Naive thymus-derived CD4-positive, alpha-beta T cell (primary cell): ENCODE measurements at regions of chr6 and their contacts with region 1.

Region 1: DNA sequence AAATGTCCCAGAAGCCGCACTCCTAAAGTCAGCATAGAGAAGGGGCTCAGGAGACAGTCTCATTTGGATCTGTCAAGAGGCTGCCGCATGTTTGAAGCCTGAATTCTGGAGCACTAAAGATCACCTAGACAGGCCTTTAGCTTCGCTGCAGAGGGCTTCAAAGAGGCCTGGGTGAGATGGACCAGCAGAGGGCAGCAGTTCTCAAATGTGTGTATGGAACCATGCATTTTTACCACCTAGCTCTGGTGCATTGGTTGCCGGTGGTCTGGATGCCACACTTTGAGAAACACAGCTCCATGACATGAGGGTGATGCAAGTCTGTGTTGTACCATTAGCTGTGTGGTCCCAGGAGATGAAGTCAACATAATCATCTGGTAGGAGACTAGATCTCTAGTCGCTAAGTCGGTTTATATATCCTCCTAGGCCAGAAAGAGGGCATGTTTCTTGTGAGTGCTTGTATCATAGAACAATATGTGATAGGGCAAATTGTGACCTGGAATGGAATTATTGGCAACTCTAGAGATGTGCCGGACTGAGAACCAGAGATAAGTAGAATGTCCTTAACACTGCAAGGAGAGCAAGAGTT is 64.8 kb downstream of the KIAA0319 start:
- DNase-seq: peak; percentile 44 to 73 (median 65)
- ATAC-seq: peak; percentile 92
- H3K4me3 ChIP-seq: no peak overlapping the region
- H3K4me3 Mint-ChIP-seq: no peak overlapping the region
- H3K27ac ChIP-seq: no peak overlapping the region
- H3K27ac Mint-ChIP-seq: peak overlapping the region in 2 of 9 donors; percentile 1 to 31
- H3K4me1 ChIP-seq: peaks cover 0 to 5% of the 10 kb centered on the region in 2 donors
- H3K4me1 Mint-ChIP-seq: peaks cover 3 to 13% (median 5%) of the 10 kb centered on the region in 7 donors
- H3K27me3 ChIP-seq: no peaks in the 10 kb centered on the region
- H3K27me3 Mint-ChIP-seq: peaks cover 0 to 31% (median 0%) of the 10 kb centered on the region in 5 donors

Region 2: DNA sequence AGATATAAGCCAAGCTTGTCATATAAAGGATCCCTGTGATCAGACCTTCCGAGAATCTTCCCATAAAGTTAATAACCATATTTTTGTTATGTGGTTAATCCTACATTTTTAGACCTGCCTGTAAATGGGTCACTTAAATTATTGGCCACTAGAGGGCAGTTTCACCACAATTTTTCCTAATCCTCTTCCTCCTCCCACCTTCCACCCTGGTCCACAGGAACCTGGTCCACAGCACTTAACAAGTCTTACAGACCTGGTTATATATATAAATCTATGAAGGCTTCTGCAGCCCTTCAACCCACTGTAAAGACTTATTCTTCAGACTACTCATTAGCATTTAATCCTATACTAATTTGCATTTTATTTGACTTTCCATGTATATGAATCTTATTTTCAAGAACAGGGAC is 150.1 kb before region 1 on chr6:
- CTCF ChIA-PET with region 1: interaction called, 3 read pairs
- POLR2A ChIA-PET with region 1: no interaction called
- intact Hi-C with region 1: loop called (anchors 5 kb)
- DNase-seq: peak in 7 of 9 donors; percentile 4 to 41 (median 28)
- ATAC-seq: peak; percentile 46
- H3K4me3 ChIP-seq: no peak overlapping the region
- H3K4me3 Mint-ChIP-seq: no peak overlapping the region
- H3K27ac ChIP-seq: no peak overlapping the region
- H3K27ac Mint-ChIP-seq: no peak overlapping the region
- H3K4me1 ChIP-seq: no peaks in the 10 kb centered on the region
- H3K4me1 Mint-ChIP-seq: no peaks in the 10 kb centered on the region
- H3K27me3 ChIP-seq: no peaks in the 10 kb centered on the region
- H3K27me3 Mint-ChIP-seq: no peaks in the 10 kb centered on the region

Region 3: GRCh38 chr6:24547243-24547642 is 33.9 kb before region 1 on chr6:
- CTCF ChIA-PET with region 1: interaction called, 4 read pairs
- POLR2A ChIA-PET with region 1: no interaction called
- intact Hi-C with region 1: loop called in 1 of 2 experiments (anchors 2 kb)
- DNase-seq: peak in 8 of 9 donors; percentile 19 to 52 (median 32)
- ATAC-seq: peak; percentile 62
- H3K4me3 ChIP-seq: no peak overlapping the region
- H3K4me3 Mint-ChIP-seq: peak overlapping the region in 3 of 10 donors; percentile 9 to 21 (median 21)
- H3K27ac ChIP-seq: no peak overlapping the region
- H3K27ac Mint-ChIP-seq: no peak overlapping the region
- H3K4me1 ChIP-seq: peaks cover 0 to 5% of the 10 kb centered on the region in 2 donors
- H3K4me1 Mint-ChIP-seq: peaks cover 0 to 10% (median 8%) of the 10 kb centered on the region in 7 donors
- H3K27me3 ChIP-seq: no peaks in the 10 kb centered on the region
- H3K27me3 Mint-ChIP-seq: peaks cover 0 to 27% (median 9%) of the 10 kb centered on the region in 5 donors

Region 4: DNA sequence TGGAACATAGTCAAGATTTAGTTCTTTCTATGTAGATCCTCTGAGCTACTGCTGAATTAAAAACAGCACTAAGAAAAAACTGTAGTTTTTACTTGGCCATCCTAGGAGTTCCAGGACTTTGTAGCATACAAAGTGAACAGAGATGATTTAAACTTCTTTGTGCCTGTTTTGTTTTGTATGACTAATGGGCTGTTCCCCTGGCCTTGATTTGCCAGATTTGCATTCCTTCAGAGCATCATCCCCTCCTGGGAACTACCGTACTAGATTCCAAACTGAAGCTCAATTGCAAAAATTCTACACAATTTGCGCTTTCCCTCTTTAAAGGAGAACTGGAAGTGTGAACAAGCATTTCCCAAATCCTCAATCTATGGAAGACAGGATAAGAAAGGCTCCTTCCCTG is 108.8 kb after region 1 on chr6:
- CTCF ChIA-PET with region 1: interaction called, 9 read pairs
- POLR2A ChIA-PET with region 1: no interaction called
- intact Hi-C with region 1: loop called (anchors 1 kb)
- DNase-seq: no peak
- ATAC-seq: no peak
- H3K4me3 ChIP-seq: no peak overlapping the region
- H3K4me3 Mint-ChIP-seq: no peak overlapping the region
- H3K27ac ChIP-seq: no peak overlapping the region
- H3K27ac Mint-ChIP-seq: peak overlapping the region in 1 of 9 donors; percentile 18
- H3K4me1 ChIP-seq: peaks cover 0 to 6% of the 10 kb centered on the region in 2 donors
- H3K4me1 Mint-ChIP-seq: peaks cover 7 to 24% (median 11%) of the 10 kb centered on the region in 7 donors
- H3K27me3 ChIP-seq: no peaks in the 10 kb centered on the region
- H3K27me3 Mint-ChIP-seq: no peaks in the 10 kb centered on the region

Region 5: GRCh38 chr6:24774696-24775519 is 193.7 kb after region 1 on chr6 and contains the start of gene GMNN:
- CTCF ChIA-PET with region 1: interaction called, 3 read pairs
- POLR2A ChIA-PET with region 1: no interaction called
- intact Hi-C with region 1: loop called in 1 of 2 experiments (anchors 2 kb)
- DNase-seq: peak; percentile 91 to 99 (median 94)
- ATAC-seq: peak; percentile 95
- H3K4me3 ChIP-seq: peak within 1 kb of the TSS; percentile 93
- H3K4me3 Mint-ChIP-seq: peak within 1 kb of the TSS; percentile 98 to 99 (median 98)
- H3K27ac ChIP-seq: peak within 1 kb of the TSS; percentile 90
- H3K27ac Mint-ChIP-seq: peak within 1 kb of the TSS; percentile 91 to 98 (median 97)
- H3K4me1 ChIP-seq: peaks cover 6 to 7% of the 10 kb centered on the region in 2 donors
- H3K4me1 Mint-ChIP-seq: peaks cover 10 to 38% (median 21%) of the 10 kb centered on the region in 7 donors
- H3K27me3 ChIP-seq: no peaks in the 10 kb centered on the region
- H3K27me3 Mint-ChIP-seq: no peaks in the 10 kb centered on the region
- total RNA-seq, gene GMNN: 5.1 to 54.6 (median 7.0) TPM

Region 6: DNA sequence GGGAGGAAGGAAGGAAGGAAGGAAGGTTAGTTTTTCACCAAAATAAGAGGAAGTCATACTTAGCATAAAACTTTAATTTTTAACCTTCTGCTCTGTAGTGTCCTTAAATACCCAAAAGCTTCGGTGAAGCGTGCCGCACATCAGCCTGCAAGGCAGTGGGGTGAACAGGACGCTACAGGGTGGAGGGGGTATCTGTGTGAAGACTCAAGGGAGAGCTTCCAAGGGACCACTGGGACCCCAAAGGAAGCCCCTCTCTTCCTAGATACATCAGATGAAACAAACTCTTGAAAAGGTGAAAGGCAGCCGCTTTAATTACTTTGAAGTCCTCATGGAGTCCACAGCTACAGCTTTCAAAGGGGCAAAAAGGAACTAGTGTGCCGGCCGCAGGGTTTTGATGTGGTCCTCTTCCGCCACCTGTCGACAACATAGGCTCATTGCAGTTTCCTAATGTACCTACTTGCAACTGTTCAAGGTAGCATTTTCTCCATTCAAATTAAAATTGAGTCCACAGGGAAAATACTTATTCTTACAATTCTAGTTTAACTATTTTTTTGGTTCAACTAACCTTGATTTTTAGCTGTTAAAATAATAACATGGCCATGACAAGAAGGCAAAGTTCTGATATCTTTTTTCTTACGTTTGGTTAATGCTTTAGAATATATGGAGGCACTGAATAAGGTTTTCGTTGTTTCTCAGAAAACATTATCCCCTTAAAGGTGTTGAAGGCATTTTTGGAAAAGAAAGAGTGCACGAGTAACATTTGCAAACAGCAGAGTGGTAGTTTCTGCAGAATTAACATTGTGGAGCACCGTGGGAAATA is 489.6 kb after region 1 on chr6:
- CTCF ChIA-PET with region 1: interaction called, 9 read pairs
- POLR2A ChIA-PET with region 1: no interaction called
- intact Hi-C with region 1: loop called (anchors 1 to 2 kb)
- DNase-seq: peak; percentile 54 to 85 (median 79)
- ATAC-seq: peak; percentile 99
- H3K4me3 ChIP-seq: no peak overlapping the region
- H3K4me3 Mint-ChIP-seq: peak overlapping the region in 8 of 10 donors; percentile 10 to 70 (median 50)
- H3K27ac ChIP-seq: no peak overlapping the region
- H3K27ac Mint-ChIP-seq: peak overlapping the region; percentile 43 to 92 (median 83)
- H3K4me1 ChIP-seq: peaks cover 0 to 3% of the 10 kb centered on the region in 2 donors
- H3K4me1 Mint-ChIP-seq: peaks cover 5 to 15% (median 9%) of the 10 kb centered on the region in 7 donors
- H3K27me3 ChIP-seq: no peaks in the 10 kb centered on the region
- H3K27me3 Mint-ChIP-seq: peaks cover 0 to 7% (median 0%) of the 10 kb centered on the region in 5 donors

Region 7: DNA sequence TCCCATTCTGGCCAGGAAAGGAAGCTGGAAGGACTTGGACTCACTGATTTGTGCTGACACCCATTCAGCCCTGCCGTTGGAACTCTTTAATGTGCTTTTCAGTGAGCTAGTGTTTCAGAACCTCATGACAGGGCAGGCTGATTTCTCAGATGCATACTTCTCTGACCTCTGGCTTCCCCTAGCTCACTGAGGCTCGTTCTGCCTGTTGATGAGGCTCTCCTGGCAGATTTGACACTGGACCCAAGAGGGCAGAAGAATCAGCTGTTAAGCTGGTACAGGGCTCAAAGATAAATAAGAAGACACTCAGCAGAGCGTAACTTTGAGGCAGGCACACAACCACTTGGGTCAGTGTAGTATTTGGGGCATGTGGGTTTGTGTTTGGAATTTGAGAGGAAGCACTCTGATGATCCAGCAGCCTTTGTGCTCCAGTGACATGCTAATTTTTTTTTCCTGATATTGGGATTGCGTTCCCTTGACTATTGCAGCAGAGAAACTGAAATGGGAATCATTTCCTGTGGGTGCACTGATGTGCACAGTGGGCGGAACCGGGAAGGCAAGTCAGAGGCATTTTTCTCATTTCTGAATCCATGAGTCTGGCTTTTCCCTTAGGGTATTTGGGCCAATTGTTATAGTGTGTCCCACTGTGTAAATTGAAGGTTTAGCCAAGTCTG is 778.1 kb after region 1 on chr6:
- CTCF ChIA-PET with region 1: no interaction called
- POLR2A ChIA-PET with region 1: no interaction called
- intact Hi-C with region 1: no loop called
- DNase-seq: no peak
- ATAC-seq: no peak
- H3K4me3 ChIP-seq: no peak overlapping the region
- H3K4me3 Mint-ChIP-seq: no peak overlapping the region
- H3K27ac ChIP-seq: no peak overlapping the region
- H3K27ac Mint-ChIP-seq: peak overlapping the region in 4 of 9 donors; percentile 18 to 55 (median 38)
- H3K4me1 ChIP-seq: no peaks in the 10 kb centered on the region
- H3K4me1 Mint-ChIP-seq: peaks cover 0 to 69% (median 34%) of the 10 kb centered on the region in 7 donors
- H3K27me3 ChIP-seq: no peaks in the 10 kb centered on the region
- H3K27me3 Mint-ChIP-seq: no peaks in the 10 kb centered on the region